Panc1 (cell line): ENCODE measurements at regions of chr1 and their contacts with region 1.

Region 1: DNA sequence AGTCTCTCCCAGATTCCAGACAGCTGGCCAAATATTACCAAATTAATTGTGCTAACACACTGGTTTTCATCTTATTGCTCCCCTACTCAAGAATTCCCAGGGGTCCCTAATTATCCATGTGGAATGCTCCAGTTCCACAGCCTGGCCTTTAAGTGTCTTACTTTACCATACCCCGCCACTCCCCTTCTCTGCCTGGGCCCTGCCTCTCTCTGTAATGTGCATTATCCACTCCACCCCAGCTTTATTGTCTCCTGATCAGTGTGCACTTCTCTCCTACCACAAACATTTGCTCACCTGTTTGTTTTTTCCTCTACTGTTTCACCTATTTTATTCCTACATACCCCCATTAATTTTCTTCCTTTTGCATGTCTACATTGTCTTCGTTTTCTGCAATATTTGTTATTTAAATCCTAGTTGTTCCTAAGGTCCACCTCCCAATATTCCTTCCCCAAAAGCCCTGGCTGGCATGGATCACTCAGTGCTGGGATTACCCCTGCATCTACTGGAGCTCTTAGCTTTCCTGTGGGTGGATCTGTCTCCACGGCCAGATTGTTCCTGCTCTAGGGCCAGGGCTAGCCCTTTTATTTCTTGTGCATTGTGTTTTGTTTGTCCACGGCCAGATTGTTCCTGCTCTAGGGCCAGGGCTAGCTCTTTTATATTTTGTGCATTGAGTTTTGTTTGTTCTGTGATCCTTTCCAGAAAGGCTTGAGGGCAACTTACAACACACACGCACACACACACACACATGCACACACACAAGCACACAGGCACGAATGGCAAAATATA is 33.4 kb upstream of the ATP1B1 start:
- DNase-seq: no peak
- ATAC-seq: no peak
- H3K4me3 ChIP-seq: no peak overlapping the region
- H3K27ac ChIP-seq: no peak overlapping the region
- H3K4me1 ChIP-seq: no peaks in the 10 kb centered on the region
- H3K27me3 ChIP-seq: no peaks in the 10 kb centered on the region
- CTCF ChIP-seq: no peak

Region 2: DNA sequence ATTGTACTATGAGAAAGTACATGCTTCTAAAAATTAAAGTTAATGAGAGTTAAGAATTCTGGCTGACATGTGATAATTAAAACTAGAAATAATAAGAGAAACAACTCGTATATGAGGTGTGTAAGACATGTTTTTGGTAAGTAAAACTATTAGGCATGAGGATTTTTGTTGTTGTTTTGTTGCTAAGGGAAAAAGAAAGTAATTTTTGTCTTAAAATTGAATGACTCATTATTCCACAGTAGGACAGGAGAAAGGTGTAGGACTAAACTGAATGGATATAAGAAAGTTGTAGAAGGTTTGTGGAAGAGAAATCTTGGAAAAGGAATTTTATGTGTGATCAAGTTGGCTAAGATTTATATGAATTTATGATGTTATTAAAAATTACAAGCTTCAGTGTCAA is 737.6 kb before region 1 on chr1:
- CTCF ChIA-PET with region 1: interaction called, 11 read pairs
- POLR2A ChIA-PET with region 1: no interaction called
- in situ Hi-C with region 1: no loop called
- intact Hi-C with region 1: no loop called
- DNase-seq: no peak
- ATAC-seq: no peak
- H3K4me3 ChIP-seq: no peak overlapping the region
- H3K27ac ChIP-seq: no peak overlapping the region
- H3K4me1 ChIP-seq: no peaks in the 10 kb centered on the region
- H3K27me3 ChIP-seq: no peaks in the 10 kb centered on the region
- CTCF ChIP-seq: no peak